Common myeloid progenitor, CD34-positive (primary cell): ENCODE measurements at regions of chr10 and their contacts with region 1.

Region 1: GRCh38 chr10:125868372-125868975 is 12.6 kb downstream of the DHX32 start:
- DNase-seq: peak; percentile 55 to 75 (median 69)
- H3K4me3 ChIP-seq: no peak overlapping the region
- H3K27ac ChIP-seq: no peak overlapping the region
- H3K4me1 ChIP-seq: no peaks in the 10 kb centered on the region
- H3K27me3 ChIP-seq: no peaks in the 10 kb centered on the region

Region 2: DNA sequence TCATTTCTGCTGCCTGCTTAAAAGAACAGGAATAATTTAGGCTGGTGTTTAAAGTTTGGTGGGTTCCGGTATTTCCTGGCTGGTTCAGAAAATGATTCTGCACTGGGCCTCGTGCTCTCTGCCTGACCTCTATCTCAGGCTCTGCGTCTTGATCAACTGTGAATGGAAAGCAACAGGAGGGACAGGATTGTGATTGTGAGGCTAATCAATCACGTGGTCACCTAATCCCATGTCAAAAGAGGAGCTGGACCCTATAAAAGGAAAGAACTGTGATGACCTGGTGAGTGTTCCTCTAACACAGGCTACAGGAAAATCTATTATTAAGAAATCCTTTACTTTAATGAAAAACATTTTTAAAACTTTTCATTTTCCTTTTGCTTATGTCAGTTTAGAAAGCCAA is 12.7 kb after region 1 on chr10 and contains the start of gene DHX32:
- CTCF ChIA-PET with region 1: interaction called, 12 read pairs
- POLR2A ChIA-PET with region 1: no interaction called
- DNase-seq: no peak
- H3K4me3 ChIP-seq: no peak within 1 kb of the TSS
- H3K27ac ChIP-seq: no peak within 1 kb of the TSS
- H3K4me1 ChIP-seq: no peaks in the 10 kb centered on the region
- H3K27me3 ChIP-seq: no peaks in the 10 kb centered on the region